Heart left ventricle (tissue), 16 donors: ENCODE measurements at regions of chr2 and their contacts with region 1.

Region 1: DNA sequence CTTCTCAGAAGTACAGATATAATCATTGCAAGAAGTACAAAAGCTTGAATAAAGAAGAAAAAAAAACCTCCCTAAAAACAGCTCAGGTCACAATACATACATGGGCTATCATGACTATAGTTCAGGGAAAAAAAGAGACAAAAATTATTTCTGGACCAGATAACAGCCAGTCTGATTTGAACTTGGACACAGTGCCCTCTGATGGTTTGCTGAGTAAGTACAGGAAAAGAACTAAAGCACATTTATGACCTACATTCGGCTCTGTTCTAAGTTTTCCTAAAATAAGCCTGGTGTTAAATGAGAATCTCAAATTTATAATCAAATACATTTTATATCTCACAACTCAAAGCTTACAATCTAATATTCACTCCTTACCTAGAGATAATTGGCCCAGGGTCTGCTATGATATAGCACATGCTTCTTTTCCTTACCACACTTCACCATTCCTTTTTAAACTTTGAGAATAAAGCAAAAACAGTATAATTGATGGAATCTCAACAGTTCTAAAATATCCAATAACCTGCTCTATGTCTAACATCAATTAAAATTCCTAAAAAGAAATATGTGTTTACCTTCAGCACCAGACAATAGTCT is 81.1 kb downstream of the RAPH1 start:
- DNase-seq: peak in 2 of 5 donors; percentile 20 to 36
- ATAC-seq: peak; percentile 36 to 73 (median 64)
- H3K4me3 ChIP-seq: no peak overlapping the region
- H3K27ac ChIP-seq: no peak overlapping the region
- H3K4me1 ChIP-seq: peaks cover 0 to 23% (median 7%) of the 10 kb centered on the region in 12 donors
- H3K27me3 ChIP-seq: no peaks in the 10 kb centered on the region
- CTCF ChIP-seq: peak; percentile 58 to 84 (median 70)
- POLR2A ChIP-seq: no peak

Region 2: DNA sequence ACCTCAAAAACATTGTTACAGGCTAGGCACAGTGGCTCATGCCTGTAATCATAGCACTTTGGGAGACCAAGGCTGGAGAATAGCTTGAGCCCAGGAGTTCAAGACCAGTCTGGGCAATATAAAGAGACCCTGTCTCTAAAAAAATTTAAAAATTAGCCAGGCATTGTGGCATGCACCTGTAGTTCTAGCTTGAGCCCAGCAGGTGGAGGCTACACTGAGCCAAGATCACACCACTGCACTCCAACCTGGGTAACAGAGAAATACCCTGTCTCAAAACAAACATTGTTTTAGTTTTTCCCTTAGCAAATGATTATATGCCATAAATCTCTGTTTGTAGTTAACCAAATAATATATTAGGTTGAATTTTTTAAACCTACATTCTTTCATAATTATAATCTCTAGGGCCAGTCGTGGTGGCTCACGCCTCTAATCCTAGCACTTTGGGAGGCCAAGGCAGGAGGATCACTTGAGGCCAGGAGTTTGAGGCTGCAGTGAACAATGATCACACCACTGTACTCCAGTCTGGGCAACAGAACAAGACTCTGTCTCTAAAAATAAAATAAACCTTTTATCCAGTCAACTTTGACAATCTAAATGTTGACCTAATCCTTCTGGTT is 228.4 kb before region 1 on chr2:
- intact Hi-C with region 1: loop called in 3 of 10 experiments (anchors 10 kb)
- DNase-seq: no peak
- ATAC-seq: peak in 2 of 4 donors; percentile 34 to 45
- H3K4me3 ChIP-seq: no peak overlapping the region
- H3K27ac ChIP-seq: no peak overlapping the region
- H3K4me1 ChIP-seq: no peaks in the 10 kb centered on the region
- H3K27me3 ChIP-seq: no peaks in the 10 kb centered on the region
- CTCF ChIP-seq: peak; percentile 42 to 66 (median 54)
- POLR2A ChIP-seq: no peak